ENCODE measurements at regions of chr14 and their contacts with region 1.

Region 1: GRCh38 chr14:105999361-106000028 is 473.1 kb downstream of the TMEM121 start:
- H3K4me3 Mint-ChIP-seq: no peak overlapping the region
- H3K27ac Mint-ChIP-seq: no peak overlapping the region
- H3K4me1 Mint-ChIP-seq: peaks cover 14% of the 10 kb centered on the region
- H3K27me3 Mint-ChIP-seq: no peaks in the 10 kb centered on the region

Region 2: GRCh38 chr14:105944632-105945610 is 54.6 kb before region 1 on chr14:
- intact Hi-C with region 1: loop called (anchors 5 kb)
- H3K4me3 Mint-ChIP-seq: no peak overlapping the region
- H3K27ac Mint-ChIP-seq: peak overlapping the region; percentile 27
- H3K4me1 Mint-ChIP-seq: peaks cover 44% of the 10 kb centered on the region
- H3K27me3 Mint-ChIP-seq: peaks cover 7% of the 10 kb centered on the region

Region 3: GRCh38 chr14:106062502-106063272 is 63.2 kb after region 1 on chr14:
- intact Hi-C with region 1: no loop called
- H3K4me3 Mint-ChIP-seq: no peak overlapping the region
- H3K27ac Mint-ChIP-seq: no peak overlapping the region
- H3K4me1 Mint-ChIP-seq: no peaks in the 10 kb centered on the region
- H3K27me3 Mint-ChIP-seq: peaks cover 10% of the 10 kb centered on the region

Measured in dendritic cell treated with granulocyte-macrophage colony-stimulating factor and Interleukin-4, amounts not matched to agents 40 ng/mL and 50 ng/mL, for 4 days (primary cell).